BJ (cell line): ENCODE measurements at regions of chr2 and their contacts with region 1.

Region 1: GRCh38 chr2:111188681-111189080 is 68.0 kb downstream of the BCL2L11 start:
- DNase-seq: no peak
- H3K4me3 ChIP-seq: no peak overlapping the region
- H3K27me3 ChIP-seq: 0 out of 2 replicates have a peak, but pooled peaks cover 1% of the 10 kb centered on the region
- CTCF ChIP-seq: no peak

Region 2: GRCh38 chr2:111168528-111169239 is 20.0 kb before region 1 on chr2:
- CTCF ChIA-PET with region 1: interaction called, 10 read pairs
- POLR2A ChIA-PET with region 1: no interaction called
- DNase-seq: no peak
- H3K4me3 ChIP-seq: no peak overlapping the region
- H3K27me3 ChIP-seq: peaks cover 3% of the 10 kb centered on the region
- CTCF ChIP-seq: no peak